ENCODE measurements at regions of chr2 and their contacts with region 1.

Region 1: GRCh38 chr2:203014456-203015199 is at the start of gene NBEAL1:
- DNase-seq: peak; percentile 100
- ATAC-seq: peak; percentile 93
- H3K4me3 Mint-ChIP-seq: peak within 1 kb of the TSS; percentile 87
- H3K27ac Mint-ChIP-seq: peak within 1 kb of the TSS; percentile 84
- H3K4me1 Mint-ChIP-seq: peaks cover 26% of the 10 kb centered on the region
- H3K27me3 Mint-ChIP-seq: no peaks in the 10 kb centered on the region
- CTCF ChIP-seq: no peak
- total RNA-seq, gene NBEAL1: 8.9 and 9.3 TPM in 2 replicates

Region 2: GRCh38 chr2:203327901-203328759 is 313.5 kb after region 1 on chr2 and contains the start of gene ABI2:
- CTCF ChIA-PET with region 1: no interaction called
- POLR2A ChIA-PET with region 1: no interaction called
- intact Hi-C with region 1: loop called (anchors 2 kb)
- DNase-seq: peak; percentile 65
- ATAC-seq: peak; percentile 67
- H3K4me3 Mint-ChIP-seq: peak within 1 kb of the TSS; percentile 90
- H3K27ac Mint-ChIP-seq: peak within 1 kb of the TSS; percentile 76
- H3K4me1 Mint-ChIP-seq: peaks cover 15% of the 10 kb centered on the region
- H3K27me3 Mint-ChIP-seq: no peaks in the 10 kb centered on the region
- CTCF ChIP-seq: no peak
- total RNA-seq, gene ABI2: 13.8 and 17.3 TPM in 2 replicates

Measured in activated B cell treated with CpG ODN at 0.5 μM for 24 hours (primary cell).